PC-9 (cell line): ENCODE measurements at regions of chr11 and their contacts with region 1.

Region 1: DNA sequence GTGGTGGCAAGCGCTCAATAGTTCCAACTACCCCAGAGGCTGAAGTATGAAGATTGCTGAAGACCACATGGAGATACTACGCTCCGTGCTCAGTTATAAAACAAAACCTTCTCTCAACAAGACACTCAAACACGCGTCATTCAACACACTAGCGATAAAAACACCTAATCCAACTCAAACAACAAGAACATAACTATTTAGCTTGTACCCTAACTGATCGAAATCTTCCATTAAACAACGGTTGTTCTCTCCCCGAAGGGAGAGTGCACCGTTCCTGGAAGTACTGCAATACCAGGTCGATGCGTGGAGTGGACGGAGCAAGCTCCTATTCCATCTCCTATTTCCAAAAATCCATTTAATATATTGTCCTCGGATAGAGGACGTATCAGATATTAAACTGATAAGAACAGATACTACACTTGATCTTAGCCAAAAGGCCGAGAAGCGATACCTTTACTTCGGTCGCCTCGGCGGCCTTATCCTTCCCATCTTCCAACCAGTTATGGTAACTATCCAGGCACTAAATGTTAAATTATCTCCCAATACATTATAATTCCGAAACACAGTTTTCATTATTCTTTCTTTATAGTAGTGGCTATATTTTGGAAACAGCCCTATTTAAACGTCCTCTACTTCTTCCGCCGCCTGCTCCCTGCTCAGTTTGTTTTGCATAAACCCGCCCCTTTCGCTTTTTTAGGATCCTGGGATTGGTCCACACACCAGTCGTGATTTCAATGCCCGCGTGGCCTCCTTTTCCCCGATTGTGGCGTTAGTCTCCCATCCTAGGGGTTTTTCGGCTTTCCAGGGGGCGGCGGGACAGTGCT is 2.2 kb upstream of the WDR74 start:
- DNase-seq: peak; percentile 92 to 100
- H3K4me3 ChIP-seq: peak overlapping the region; percentile 89
- H3K27ac ChIP-seq: peak overlapping the region; percentile 94
- H3K4me1 ChIP-seq: peaks cover 17% of the 10 kb centered on the region
- H3K27me3 ChIP-seq: no peaks in the 10 kb centered on the region
- CTCF ChIP-seq: no peak

Region 2: DNA sequence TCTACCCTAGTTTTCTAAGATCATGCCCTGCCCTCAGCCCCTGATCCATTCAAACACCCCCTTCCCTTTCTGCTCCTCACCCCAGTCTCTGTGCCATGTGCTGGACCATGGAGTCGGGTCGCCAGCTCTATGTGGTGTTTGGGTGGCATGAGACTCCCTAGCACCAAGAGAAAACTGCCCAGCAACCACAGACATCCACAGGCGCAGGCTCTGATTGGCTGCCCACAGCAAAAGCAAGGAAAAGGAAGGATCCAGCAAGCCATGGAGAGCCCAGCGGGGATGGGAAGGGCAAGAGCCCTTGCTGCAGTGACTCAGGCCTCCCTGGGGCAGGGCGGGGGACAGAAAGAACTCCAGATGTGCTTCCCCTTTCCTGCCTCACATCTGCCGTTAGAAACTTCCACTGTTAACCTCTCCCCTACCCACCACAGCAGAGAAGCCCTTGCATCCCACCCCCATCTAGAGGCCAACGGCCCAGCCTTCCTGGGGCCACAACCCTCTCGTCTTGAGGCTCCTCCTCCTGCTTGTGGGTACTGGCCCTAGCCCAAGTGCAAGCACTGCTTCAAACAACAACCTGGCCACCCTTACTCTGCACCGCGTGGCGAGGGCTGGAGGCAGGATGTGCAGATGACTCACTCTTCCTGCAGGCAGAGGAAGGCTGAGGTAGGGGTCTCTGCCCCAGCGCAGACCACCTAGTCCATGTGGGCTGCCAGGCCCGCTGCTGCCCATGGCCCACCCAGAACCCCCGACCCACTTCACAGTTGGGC is 285.3 kb before region 1 on chr11:
- CTCF ChIA-PET with region 1: no interaction called
- POLR2A ChIA-PET with region 1: interaction called, 11 read pairs
- intact Hi-C with region 1: loop called (anchors 5 kb)
- DNase-seq: peak; percentile 90 to 94
- H3K4me3 ChIP-seq: peak overlapping the region; percentile 38; the same call in 1 of the 2 replicates
- H3K27ac ChIP-seq: peak overlapping the region; percentile 92
- H3K4me1 ChIP-seq: peaks cover 96% of the 10 kb centered on the region
- H3K27me3 ChIP-seq: no peaks in the 10 kb centered on the region
- CTCF ChIP-seq: no peak

Region 3: DNA sequence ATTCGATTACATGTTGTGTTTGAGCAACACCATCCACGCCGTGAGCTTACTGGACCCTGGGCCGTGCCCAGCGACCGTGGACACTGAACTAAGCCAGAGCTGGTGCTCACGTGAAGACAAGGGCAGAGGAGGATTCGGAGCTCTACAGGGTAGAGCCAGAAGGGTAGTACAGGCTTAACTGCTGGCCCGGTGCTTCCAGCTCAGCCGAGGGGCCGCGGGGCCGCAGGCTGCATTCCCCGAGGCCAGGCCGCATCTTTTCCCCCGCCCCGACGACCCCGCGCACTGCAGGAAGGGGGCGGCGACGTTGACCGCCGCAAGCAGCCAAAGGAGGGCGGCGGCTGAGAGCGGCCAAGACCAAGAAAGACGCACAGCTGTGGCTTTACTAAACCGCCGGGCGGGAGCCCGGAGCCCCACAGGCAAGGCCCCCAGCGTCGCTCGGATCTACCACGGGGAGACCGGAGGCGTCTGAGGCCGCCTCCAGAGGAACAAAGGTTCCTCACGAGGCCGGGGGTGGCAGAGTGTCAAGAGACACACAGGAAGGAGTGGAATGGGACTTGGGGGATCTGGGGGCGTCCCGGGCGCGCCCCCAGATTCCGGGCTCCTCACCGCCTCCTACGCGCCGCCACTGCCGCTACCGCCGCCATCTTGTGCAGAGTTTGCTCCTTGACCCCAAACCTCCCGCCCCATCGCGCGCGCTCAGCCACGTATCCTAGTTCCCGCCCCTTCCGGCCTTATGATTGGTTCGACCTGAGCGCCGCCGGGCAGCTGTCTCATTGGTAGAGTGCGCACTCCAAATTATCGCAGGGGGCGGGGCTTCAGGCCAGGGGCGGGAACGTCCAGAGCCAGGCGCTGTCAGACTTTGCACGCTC is 195.4 kb before region 1 on chr11 and contains the start of gene GANAB:
- CTCF ChIA-PET with region 1: no interaction called
- POLR2A ChIA-PET with region 1: interaction called, 4 read pairs
- intact Hi-C with region 1: loop called (anchors 1 kb)
- DNase-seq: peak; percentile 95 to 98
- H3K4me3 ChIP-seq: peak within 1 kb of the TSS; percentile 99
- H3K27ac ChIP-seq: peak within 1 kb of the TSS; percentile 48
- H3K4me1 ChIP-seq: peaks cover 15% of the 10 kb centered on the region; the same call in 1 of the 2 replicates
- H3K27me3 ChIP-seq: no peaks in the 10 kb centered on the region
- CTCF ChIP-seq: no peak
- total RNA-seq, gene GANAB: 478 and 525 TPM in 2 replicates

Region 4: GRCh38 chr11:62715150-62716135 is 126.1 kb before region 1 on chr11:
- CTCF ChIA-PET with region 1: no interaction called
- POLR2A ChIA-PET with region 1: no interaction called
- intact Hi-C with region 1: no loop called
- DNase-seq: no peak
- H3K4me3 ChIP-seq: no peak overlapping the region
- H3K27ac ChIP-seq: no peak overlapping the region
- H3K4me1 ChIP-seq: peaks cover 6% of the 10 kb centered on the region; the same call in 1 of the 2 replicates
- H3K27me3 ChIP-seq: no peaks in the 10 kb centered on the region
- CTCF ChIP-seq: no peak

Region 5: GRCh38 chr11:62753736-62754603 is 87.6 kb before region 1 on chr11 and contains the start of gene ZBTB3:
- CTCF ChIA-PET with region 1: no interaction called
- POLR2A ChIA-PET with region 1: interaction called, 37 read pairs
- intact Hi-C with region 1: no loop called
- DNase-seq: peak; percentile 98
- H3K4me3 ChIP-seq: peak within 1 kb of the TSS; percentile 63
- H3K27ac ChIP-seq: peak within 1 kb of the TSS; percentile 46
- H3K4me1 ChIP-seq: peaks cover 17% of the 10 kb centered on the region
- H3K27me3 ChIP-seq: no peaks in the 10 kb centered on the region
- CTCF ChIP-seq: no peak
- total RNA-seq, gene ZBTB3: 16.5 and 17.2 TPM in 2 replicates

Region 6: GRCh38 chr11:62855571-62856332 is 14.2 kb after region 1 on chr11:
- CTCF ChIA-PET with region 1: interaction called, 3 read pairs
- POLR2A ChIA-PET with region 1: interaction called, 39 read pairs
- intact Hi-C with region 1: loop called (anchors 1 kb)
- DNase-seq: peak; percentile 98 to 99
- H3K4me3 ChIP-seq: peak overlapping the region; percentile 97
- H3K27ac ChIP-seq: peak overlapping the region; percentile 85
- H3K4me1 ChIP-seq: peaks cover 37% of the 10 kb centered on the region
- H3K27me3 ChIP-seq: no peaks in the 10 kb centered on the region
- CTCF ChIP-seq: no peak

Region 7: DNA sequence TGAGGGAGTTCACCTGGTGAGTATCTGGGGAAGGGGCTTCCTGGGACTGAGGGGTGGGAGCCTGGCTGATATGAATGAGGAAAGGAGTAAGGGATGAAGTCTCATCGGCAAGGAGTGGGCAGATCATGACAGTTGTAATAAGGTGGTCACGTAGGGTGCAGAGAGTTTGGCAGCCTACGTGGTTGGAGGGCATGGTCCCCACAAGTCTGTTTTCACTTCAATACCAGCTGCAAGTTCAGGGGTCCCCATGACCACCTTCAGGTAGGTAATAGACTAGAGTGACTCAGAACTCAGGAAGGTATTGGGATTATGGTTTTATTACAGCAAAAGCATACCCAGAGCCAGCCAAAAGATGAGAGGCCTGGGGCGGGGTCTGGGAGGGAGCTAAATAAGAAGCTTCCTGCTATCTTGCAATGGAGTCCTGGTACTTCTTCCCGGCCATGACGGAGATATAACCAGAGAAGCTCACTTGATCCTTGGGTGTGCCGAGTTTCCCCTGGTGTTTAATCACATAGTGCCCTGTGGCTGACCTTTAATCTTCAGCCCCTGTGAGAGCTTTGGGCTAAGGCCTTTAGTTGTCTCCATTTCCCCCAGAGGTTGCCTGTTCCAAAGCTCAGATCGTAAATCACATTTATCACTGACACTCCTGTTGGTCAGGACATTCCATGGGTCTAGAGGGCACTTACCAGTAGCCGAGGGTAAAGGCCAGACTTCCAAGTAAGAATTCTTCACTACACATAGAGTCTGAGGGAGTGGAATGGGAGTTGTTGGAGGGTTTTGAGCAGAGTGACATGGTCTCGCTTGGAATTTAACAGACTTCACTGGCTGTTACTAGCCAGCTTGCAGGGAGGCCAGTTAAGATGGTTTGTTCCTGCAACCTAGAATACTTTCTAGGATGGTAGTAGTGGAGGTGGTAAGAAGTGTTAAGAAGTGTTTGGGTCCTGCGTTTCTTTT is 48.2 kb after region 1 on chr11:
- CTCF ChIA-PET with region 1: no interaction called
- POLR2A ChIA-PET with region 1: interaction called, 12 read pairs
- intact Hi-C with region 1: no loop called
- DNase-seq: peak in 1 of 2 experiments; percentile 61
- H3K4me3 ChIP-seq: no peak overlapping the region
- H3K27ac ChIP-seq: peak overlapping the region; percentile 27
- H3K4me1 ChIP-seq: peaks cover 15% of the 10 kb centered on the region; the same call in 1 of the 2 replicates
- H3K27me3 ChIP-seq: no peaks in the 10 kb centered on the region
- CTCF ChIP-seq: no peak

Region 8: GRCh38 chr11:63023841-63024648 is 182.5 kb after region 1 on chr11:
- CTCF ChIA-PET with region 1: no interaction called
- POLR2A ChIA-PET with region 1: no interaction called
- intact Hi-C with region 1: no loop called
- DNase-seq: peak; percentile 50 to 81
- H3K4me3 ChIP-seq: no peak overlapping the region
- H3K27ac ChIP-seq: no peak overlapping the region
- H3K4me1 ChIP-seq: no peaks in the 10 kb centered on the region
- H3K27me3 ChIP-seq: peaks cover 69% of the 10 kb centered on the region
- CTCF ChIP-seq: peak; percentile 100